Spleen (tissue), 13 donors: ENCODE measurements at regions of chr12 and their contacts with region 1.

Region 1: DNA sequence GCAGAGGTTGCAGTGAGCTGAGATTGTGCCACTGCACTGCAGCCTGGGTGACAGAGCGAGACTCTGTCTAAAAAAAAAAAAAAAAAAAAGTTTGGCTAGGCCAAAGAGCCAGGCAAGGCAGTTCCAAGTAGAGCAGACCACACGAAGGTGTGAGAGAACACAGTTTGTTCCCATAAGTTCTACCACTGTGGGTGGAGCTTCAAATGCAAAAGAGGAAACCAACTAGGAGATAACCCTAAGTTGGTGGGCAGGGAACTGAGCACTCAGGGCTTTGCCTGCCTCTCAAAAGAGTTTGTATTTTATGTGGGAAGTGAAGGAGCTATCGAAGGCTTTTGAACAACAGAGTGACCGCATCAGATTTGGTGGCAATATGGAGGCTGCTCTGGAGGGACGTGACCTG is 15.1 kb downstream of the SOCS2 start:
- DNase-seq: no peak
- H3K4me3 ChIP-seq: no peak overlapping the region
- H3K27ac ChIP-seq: no peak overlapping the region
- H3K4me1 ChIP-seq: peaks cover 0 to 20% (median 10%) of the 10 kb centered on the region in 6 donors
- H3K27me3 ChIP-seq: peaks cover 0 to 56% (median 0%) of the 10 kb centered on the region in 7 donors
- CTCF ChIP-seq: no peak
- POLR2A ChIP-seq: no peak

Region 2: GRCh38 chr12:93682846-93683261 is 95.2 kb after region 1 on chr12:
- intact Hi-C with region 1: loop called (anchors 10 kb)
- DNase-seq: no peak
- H3K4me3 ChIP-seq: no peak overlapping the region
- H3K27ac ChIP-seq: no peak overlapping the region
- H3K4me1 ChIP-seq: peaks cover 8 to 41% (median 15%) of the 10 kb centered on the region in 6 donors
- H3K27me3 ChIP-seq: no peaks in the 10 kb centered on the region
- CTCF ChIP-seq: no peak
- POLR2A ChIP-seq: no peak